H1 (cell line): ENCODE measurements at regions of chr4 and their contacts with region 1.

Region 1: DNA sequence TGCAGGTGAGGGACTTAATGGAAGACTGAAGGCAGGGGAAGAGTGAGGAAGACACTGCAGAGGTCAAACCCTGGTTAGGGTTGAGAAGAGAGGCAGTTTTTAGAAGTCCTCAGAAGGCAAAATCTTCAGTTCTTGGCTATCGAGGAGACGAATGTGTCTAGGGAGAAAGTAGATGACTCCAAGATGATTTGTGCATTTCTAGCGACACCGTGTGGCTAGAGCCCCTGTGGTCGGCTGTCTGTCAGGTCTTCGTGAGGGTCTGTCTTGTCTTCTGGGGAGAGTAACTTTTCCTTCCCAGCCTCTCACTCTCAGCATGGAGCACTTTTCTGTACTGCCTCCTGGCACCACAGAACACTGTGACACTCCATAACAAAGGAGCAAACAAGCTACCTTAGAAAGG is 458.1 kb downstream of the STIM2 start:
- DNase-seq: peak; percentile 49 to 73
- H3K4me3 ChIP-seq: no peak overlapping the region
- H3K27ac ChIP-seq: no peak overlapping the region
- H3K4me1 ChIP-seq: no peaks in the 10 kb centered on the region; a peak in 1 of 7 replicates
- H3K27me3 ChIP-seq: peaks cover 0 to 1% (median 0%) of the 10 kb centered on the region in 4 experiments; a peak in 1 of 7 replicates
- CTCF ChIP-seq: peak; percentile 68 to 89 (median 82)
- EP300 ChIP-seq: no peak
- POLR2A ChIP-seq: no peak
- RAD21 ChIP-seq: peak; percentile 94 to 97

Region 2: GRCh38 chr4:27048429-27049238 is 270.1 kb before region 1 on chr4:
- CTCF ChIA-PET with region 1: interaction called, 85 read pairs
- POLR2A ChIA-PET with region 1: interaction called, 3 read pairs
- DNase-seq: no peak
- H3K4me3 ChIP-seq: no peak overlapping the region
- H3K27ac ChIP-seq: no peak overlapping the region
- H3K4me1 ChIP-seq: peaks cover 0 to 4% (median 1%) of the 10 kb centered on the region in 4 experiments; a peak in 2 of 7 replicates
- H3K27me3 ChIP-seq: no peaks in the 10 kb centered on the region
- CTCF ChIP-seq: peak in 2 of 3 experiments; percentile 42 to 48; a peak in 2 of 4 replicates
- EP300 ChIP-seq: no peak
- POLR2A ChIP-seq: no peak
- RAD21 ChIP-seq: peak; percentile 82

Region 3: GRCh38 chr4:27057662-27058061 is 261.1 kb before region 1 on chr4:
- CTCF ChIA-PET with region 1: interaction called, 85 read pairs
- POLR2A ChIA-PET with region 1: no interaction called
- DNase-seq: no peak
- H3K4me3 ChIP-seq: no peak overlapping the region
- H3K27ac ChIP-seq: no peak overlapping the region
- H3K4me1 ChIP-seq: peaks cover 0 to 6% (median under 1%) of the 10 kb centered on the region in 4 experiments; a peak in 1 of 7 replicates
- H3K27me3 ChIP-seq: no peaks in the 10 kb centered on the region
- CTCF ChIP-seq: no peak
- EP300 ChIP-seq: no peak
- POLR2A ChIP-seq: no peak
- RAD21 ChIP-seq: no peak

Region 4: DNA sequence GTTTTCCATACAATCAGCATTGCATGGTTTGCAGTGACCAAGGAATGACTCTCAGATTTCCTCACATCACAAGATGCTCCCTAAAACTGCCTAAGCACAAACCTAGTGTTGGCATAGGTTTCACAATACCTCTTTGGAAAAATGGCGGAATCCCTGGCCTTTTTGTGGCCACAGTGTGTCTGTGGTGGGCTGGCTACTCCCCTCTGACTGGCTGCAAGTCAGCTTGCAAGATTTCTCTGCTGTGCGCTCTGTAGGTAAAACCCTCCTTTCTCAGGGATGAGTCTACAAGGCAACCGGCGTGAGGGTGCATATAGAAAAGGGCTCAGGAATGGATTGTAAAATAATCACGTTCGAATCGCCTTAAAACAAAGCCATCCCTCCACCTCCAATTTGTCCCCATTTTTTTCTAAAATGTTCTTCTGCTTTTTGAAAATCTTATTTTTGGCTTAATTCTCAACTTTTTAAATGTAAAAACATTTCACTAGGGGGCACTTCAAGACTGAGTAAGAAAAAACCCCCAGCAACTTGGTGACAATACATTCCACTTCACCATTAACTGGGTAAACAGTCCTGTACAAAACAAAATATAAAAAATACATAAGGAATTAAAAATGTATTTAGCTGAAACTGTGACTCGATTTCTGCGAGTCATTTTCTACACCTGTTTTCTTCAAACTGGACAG is 222.5 kb before region 1 on chr4:
- CTCF ChIA-PET with region 1: interaction called, 60 read pairs
- POLR2A ChIA-PET with region 1: no interaction called
- DNase-seq: no peak
- H3K4me3 ChIP-seq: no peak overlapping the region
- H3K27ac ChIP-seq: no peak overlapping the region
- H3K4me1 ChIP-seq: peaks cover 2 to 10% (median 9%) of the 10 kb centered on the region in 4 experiments; a peak in 5 of 7 replicates
- H3K27me3 ChIP-seq: no peaks in the 10 kb centered on the region; a peak in 1 of 7 replicates
- CTCF ChIP-seq: peak in 1 of 3 experiments; percentile 2; a peak in 1 of 4 replicates
- EP300 ChIP-seq: no peak
- POLR2A ChIP-seq: no peak
- RAD21 ChIP-seq: peak; percentile 48 to 65

Region 5: GRCh38 chr4:27176400-27176799 is 142.3 kb before region 1 on chr4:
- CTCF ChIA-PET with region 1: interaction called, 60 read pairs
- POLR2A ChIA-PET with region 1: no interaction called
- DNase-seq: peak in 1 of 2 experiments; percentile 50
- H3K4me3 ChIP-seq: no peak overlapping the region
- H3K27ac ChIP-seq: no peak overlapping the region
- H3K4me1 ChIP-seq: no peaks in the 10 kb centered on the region
- H3K27me3 ChIP-seq: no peaks in the 10 kb centered on the region
- CTCF ChIP-seq: peak in 2 of 3 experiments; percentile 63 to 65; a peak in 3 of 4 replicates
- EP300 ChIP-seq: no peak
- POLR2A ChIP-seq: no peak
- RAD21 ChIP-seq: peak; percentile 91 to 92

Region 6: DNA sequence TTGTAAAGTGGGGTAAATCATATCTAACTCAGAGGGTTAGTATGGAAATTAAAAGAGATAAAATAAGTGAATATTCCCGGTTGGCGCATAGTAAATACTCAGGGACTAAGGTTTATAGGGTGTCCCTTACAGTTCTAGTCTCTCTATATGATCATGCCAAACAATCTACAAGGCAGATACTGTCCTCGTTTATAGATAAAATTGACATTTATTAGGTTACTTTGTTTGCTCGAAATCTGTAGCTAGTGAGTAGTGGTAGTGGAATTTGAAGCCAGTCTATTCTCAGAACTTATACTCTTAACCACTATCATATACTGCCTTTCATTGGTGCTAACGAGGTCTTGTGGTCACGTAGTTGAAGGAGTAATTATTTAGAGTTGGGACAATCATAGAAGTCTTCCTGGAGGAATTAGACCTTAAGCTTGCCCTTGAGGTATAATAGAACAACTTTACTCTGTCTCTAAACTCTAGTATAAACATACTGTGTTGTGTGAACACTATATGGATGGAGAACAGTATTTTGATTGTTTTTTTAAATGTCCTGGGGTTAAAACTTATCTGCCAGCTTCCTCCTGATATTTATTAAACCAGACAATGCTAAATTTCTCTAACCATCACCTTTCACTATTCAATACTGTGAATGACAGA is 134.1 kb before region 1 on chr4:
- CTCF ChIA-PET with region 1: interaction called, 60 read pairs
- POLR2A ChIA-PET with region 1: no interaction called
- DNase-seq: no peak
- H3K4me3 ChIP-seq: no peak overlapping the region
- H3K27ac ChIP-seq: no peak overlapping the region
- H3K4me1 ChIP-seq: no peaks in the 10 kb centered on the region
- H3K27me3 ChIP-seq: no peaks in the 10 kb centered on the region
- CTCF ChIP-seq: no peak
- EP300 ChIP-seq: no peak
- POLR2A ChIP-seq: no peak
- RAD21 ChIP-seq: no peak